BJ (cell line): ENCODE measurements at regions of chr11 and their contacts with region 1.

Region 1: DNA sequence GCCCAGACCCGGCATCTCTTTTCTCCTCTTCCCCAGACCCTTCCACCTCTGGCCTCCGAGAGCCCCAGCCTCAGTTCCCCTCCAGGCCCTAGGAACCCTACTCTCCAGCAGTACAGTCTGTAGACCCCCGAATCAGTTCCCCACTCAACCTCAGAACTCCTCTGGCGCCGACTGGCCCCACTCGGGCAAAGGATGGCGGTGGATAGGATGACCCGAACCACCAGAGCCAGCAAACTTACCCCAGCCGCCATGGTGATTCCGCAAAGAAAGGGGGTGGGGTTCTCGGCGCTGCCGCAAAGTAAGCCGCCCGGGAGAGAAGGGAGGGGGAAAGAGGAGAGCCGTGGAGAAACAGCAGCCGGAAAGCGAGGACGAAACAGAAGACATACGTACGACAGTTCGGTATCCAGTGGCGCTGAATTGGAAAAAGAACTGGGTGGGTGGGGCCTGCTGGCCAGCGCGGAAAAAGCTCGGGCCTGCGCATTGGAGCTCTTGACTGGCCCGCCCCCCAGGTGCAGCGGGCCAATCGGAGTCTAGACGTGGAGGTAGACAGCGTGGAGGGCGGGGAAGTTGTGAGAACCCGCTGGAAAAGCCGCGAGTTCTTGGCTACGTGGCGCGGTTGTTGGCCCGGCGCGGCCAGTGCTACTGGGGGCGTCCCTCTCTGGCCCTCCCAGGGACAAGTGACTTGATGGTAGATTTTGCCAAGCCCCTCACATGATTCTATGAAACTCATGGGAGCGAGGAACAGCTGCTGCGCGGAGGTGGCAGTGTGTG is at the start of gene EEF1G:
- DNase-seq: peak; percentile 100
- H3K4me3 ChIP-seq: peak within 1 kb of the TSS; percentile 63
- H3K27me3 ChIP-seq: no peaks in the 10 kb centered on the region
- CTCF ChIP-seq: no peak
- polyA plus RNA-seq, gene EEF1G: 2,358 and 2,459 TPM in 2 replicates

Region 2: GRCh38 chr11:62061351-62062222 is 512.2 kb before region 1 on chr11:
- CTCF ChIA-PET with region 1: no interaction called
- POLR2A ChIA-PET with region 1: interaction called, 11 read pairs
- DNase-seq: no peak
- H3K4me3 ChIP-seq: no peak overlapping the region
- H3K27me3 ChIP-seq: peaks cover 3% of the 10 kb centered on the region; the same call in 1 of the 2 replicates
- CTCF ChIP-seq: no peak

Region 3: DNA sequence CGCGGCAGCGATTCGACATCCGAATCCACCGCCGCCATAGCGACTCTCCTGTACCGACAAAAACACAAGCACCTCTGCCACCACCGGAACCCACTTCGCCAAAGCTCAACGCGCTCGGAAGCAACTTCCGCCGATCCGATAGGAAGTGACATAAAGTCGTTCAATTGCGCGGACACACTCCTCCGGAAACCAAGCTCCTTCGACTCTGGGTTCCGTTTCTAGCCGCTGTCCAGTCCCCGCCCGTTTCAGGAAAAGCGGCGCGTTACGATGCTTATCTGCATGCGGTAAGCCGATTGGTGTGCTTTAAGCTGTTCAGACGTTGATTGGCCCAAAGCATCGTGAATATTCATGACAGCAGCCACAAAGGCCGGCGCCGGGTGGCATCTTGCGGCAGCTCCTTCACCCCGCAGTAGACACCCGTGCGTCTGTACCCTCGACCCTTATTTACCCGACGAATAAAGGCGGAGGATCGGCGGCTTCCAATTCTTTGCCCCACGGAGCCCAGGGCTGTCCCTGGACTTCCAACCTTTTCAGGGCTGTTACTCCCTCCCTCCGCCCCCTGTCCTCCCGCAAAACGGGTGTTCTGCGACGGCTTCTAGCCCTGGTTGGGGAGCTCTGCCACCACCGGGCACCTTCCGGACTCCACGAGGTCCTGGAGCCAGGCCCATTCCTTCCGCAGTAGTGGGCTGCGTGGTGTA is 17.8 kb after region 1 on chr11 and contains the start of gene TUT1:
- CTCF ChIA-PET with region 1: interaction called, 7 read pairs
- POLR2A ChIA-PET with region 1: interaction called, 25 read pairs
- DNase-seq: peak; percentile 96
- H3K4me3 ChIP-seq: peak within 1 kb of the TSS; percentile 51
- H3K27me3 ChIP-seq: no peaks in the 10 kb centered on the region
- CTCF ChIP-seq: no peak
- polyA plus RNA-seq, gene TUT1: 6.4 and 9.9 TPM in 2 replicates